ENCODE measurements at regions of chr11 and their contacts with region 1.

Region 1: GRCh38 chr11:26134481-26135355 is 197.2 kb upstream of the ANO3 start:
- DNase-seq: peak; percentile 25
- ATAC-seq: peak; percentile 61
- H3K4me3 ChIP-seq: no peak overlapping the region
- H3K27ac ChIP-seq: no peak overlapping the region
- H3K4me1 ChIP-seq: no peaks in the 10 kb centered on the region
- H3K27me3 ChIP-seq: no peaks in the 10 kb centered on the region
- CTCF ChIP-seq: no peak; the same call in 1 of the 2 replicates

Region 2: GRCh38 chr11:25920356-25920755 is 214.4 kb before region 1 on chr11:
- CTCF ChIA-PET with region 1: no interaction called
- POLR2A ChIA-PET with region 1: no interaction called
- intact Hi-C with region 1: no loop called
- DNase-seq: no peak
- ATAC-seq: no peak
- H3K4me3 ChIP-seq: no peak overlapping the region
- H3K27ac ChIP-seq: no peak overlapping the region
- H3K4me1 ChIP-seq: no peaks in the 10 kb centered on the region
- H3K27me3 ChIP-seq: no peaks in the 10 kb centered on the region
- CTCF ChIP-seq: no peak

Region 3: GRCh38 chr11:26227296-26227695 is 92.6 kb after region 1 on chr11:
- CTCF ChIA-PET with region 1: interaction called, 4 read pairs
- POLR2A ChIA-PET with region 1: no interaction called
- intact Hi-C with region 1: loop called (anchors 2 kb)
- DNase-seq: peak; percentile 81
- ATAC-seq: peak; percentile 79
- H3K4me3 ChIP-seq: no peak overlapping the region
- H3K27ac ChIP-seq: peak overlapping the region; percentile 88
- H3K4me1 ChIP-seq: peaks cover 43% of the 10 kb centered on the region
- H3K27me3 ChIP-seq: no peaks in the 10 kb centered on the region
- CTCF ChIP-seq: peak; percentile 70

Measured in PC-3 (cell line).